Heart left ventricle (tissue), 16 donors: ENCODE measurements at regions of chr1 and their contacts with region 1.

Region 1: DNA sequence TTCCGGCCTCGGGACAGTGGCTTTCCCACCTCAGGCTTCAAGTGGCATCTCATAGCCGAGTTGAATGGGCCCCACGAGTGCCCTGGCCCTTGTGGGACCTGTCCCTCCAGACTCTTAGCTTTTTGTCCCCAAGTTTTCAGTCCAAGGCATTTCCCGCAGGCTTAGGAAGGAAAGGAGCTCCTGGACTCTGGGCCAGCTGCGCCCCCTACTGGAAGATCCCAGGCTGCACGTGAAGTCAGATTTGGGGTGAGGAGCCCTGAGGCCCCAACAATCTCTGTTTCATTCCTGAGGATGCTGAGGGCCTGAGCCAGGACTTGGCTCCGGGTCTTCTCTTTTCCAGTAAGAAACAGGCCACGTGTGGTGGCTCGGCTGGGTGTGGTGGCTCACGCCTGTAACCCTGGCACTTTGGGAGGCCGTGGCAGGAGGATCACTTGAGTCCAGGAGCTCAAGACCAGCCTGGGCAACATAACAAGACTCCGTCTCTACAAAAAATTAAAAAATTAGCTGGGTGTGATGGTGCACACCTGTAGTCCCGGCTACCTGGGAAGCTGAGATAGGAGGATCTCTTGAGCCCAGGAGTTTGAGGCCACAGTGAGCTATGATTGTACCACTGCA is 67.4 kb downstream of the ARHGEF10L start:
- DNase-seq: peak; percentile 59 to 85 (median 72)
- ATAC-seq: peak; percentile 7 to 59 (median 49)
- H3K4me3 ChIP-seq: no peak overlapping the region
- H3K27ac ChIP-seq: peak overlapping the region in 11 of 12 donors; percentile 39 to 95 (median 82)
- H3K4me1 ChIP-seq: peaks cover 3 to 25% (median 19%) of the 10 kb centered on the region in 12 donors
- H3K27me3 ChIP-seq: no peaks in the 10 kb centered on the region
- CTCF ChIP-seq: peak; percentile 83 to 93 (median 88)
- POLR2A ChIP-seq: no peak

Region 2: DNA sequence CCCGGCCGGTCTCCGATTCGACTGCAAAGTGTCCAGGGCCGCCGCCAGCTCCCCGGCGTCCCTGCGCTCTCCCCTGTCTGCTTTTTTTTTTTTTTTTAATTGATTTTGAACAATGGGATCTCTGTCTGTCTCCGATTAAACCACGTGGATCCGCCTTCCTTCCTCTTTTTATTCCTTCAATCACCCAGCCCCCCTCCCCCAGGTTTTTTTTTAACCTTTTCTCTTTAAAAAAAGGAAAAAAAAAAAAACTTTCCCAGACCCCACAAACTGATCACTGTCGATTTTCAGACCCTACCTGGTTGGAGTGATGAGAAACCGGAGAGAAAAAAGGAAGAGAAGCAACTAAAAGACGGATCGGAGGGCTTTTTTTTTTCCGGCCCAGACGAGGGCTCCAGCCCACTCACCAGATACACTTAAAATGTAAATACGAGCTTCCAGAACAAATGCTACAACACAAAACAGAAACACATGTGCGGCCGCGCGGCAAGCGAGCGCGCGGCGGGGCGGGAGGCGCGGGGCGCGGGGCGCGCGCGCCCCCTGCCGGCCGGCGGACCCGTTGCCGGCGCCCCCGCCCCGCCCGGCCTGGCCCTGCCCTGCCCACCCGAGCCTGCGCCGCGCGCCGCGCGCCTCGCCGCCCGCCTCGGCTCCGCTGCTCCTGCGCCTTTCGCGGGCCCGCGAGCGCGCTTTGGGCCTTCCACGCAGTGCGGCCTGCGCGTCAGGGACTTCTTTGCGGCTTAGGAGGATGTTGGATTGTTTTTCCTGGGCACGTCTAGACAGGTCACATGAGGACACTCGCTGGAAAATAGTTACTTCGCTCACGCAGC is 167.5 kb before region 1 on chr1 and contains the start of gene RCC2:
- intact Hi-C with region 1: loop called in 1 of 10 experiments (anchors 5 kb)
- DNase-seq: peak; percentile 70 to 87 (median 77)
- ATAC-seq: peak; percentile 28 to 83 (median 67)
- H3K4me3 ChIP-seq: peak within 1 kb of the TSS; percentile 56 to 95 (median 80)
- H3K27ac ChIP-seq: peak within 1 kb of the TSS; percentile 36 to 93 (median 84)
- H3K4me1 ChIP-seq: peaks cover 0 to 35% (median 16%) of the 10 kb centered on the region in 12 donors
- H3K27me3 ChIP-seq: no peaks in the 10 kb centered on the region
- CTCF ChIP-seq: no peak
- POLR2A ChIP-seq: no peak
- total RNA-seq, gene RCC2: 7.9 to 39.1 (median 14.3) TPM

Region 3: GRCh38 chr1:17502326-17502778 is 104.6 kb before region 1 on chr1:
- intact Hi-C with region 1: loop called (anchors 1 to 2 kb)
- DNase-seq: peak; percentile 81 to 91 (median 85)
- ATAC-seq: peak; percentile 89 to 97 (median 94)
- H3K4me3 ChIP-seq: no peak overlapping the region
- H3K27ac ChIP-seq: peak overlapping the region in 4 of 12 donors; percentile 12 to 34 (median 24)
- H3K4me1 ChIP-seq: peaks cover 0 to 12% (median 5%) of the 10 kb centered on the region in 12 donors
- H3K27me3 ChIP-seq: peaks cover 0 to 7% (median 0%) of the 10 kb centered on the region in 9 donors
- CTCF ChIP-seq: peak; percentile 76 to 91 (median 87)
- POLR2A ChIP-seq: no peak

Region 4: GRCh38 chr1:17569200-17570161 is 37.5 kb before region 1 on chr1:
- intact Hi-C with region 1: loop called in 1 of 10 experiments (anchors 1 kb)
- DNase-seq: peak; percentile 81 to 90 (median 86)
- ATAC-seq: peak; percentile 78 to 87 (median 84)
- H3K4me3 ChIP-seq: peak overlapping the region in 5 of 12 donors; percentile 4 to 12 (median 6)
- H3K27ac ChIP-seq: peak overlapping the region; percentile 86 to 99 (median 95)
- H3K4me1 ChIP-seq: peaks cover 2 to 95% (median 70%) of the 10 kb centered on the region in 12 donors
- H3K27me3 ChIP-seq: no peaks in the 10 kb centered on the region
- CTCF ChIP-seq: no peak
- POLR2A ChIP-seq: peak in 1 of 2 donors; percentile 38

Region 5: GRCh38 chr1:18134324-18135046 is 527.6 kb after region 1 on chr1:
- intact Hi-C with region 1: no loop called
- DNase-seq: no peak
- ATAC-seq: no peak
- H3K4me3 ChIP-seq: no peak overlapping the region
- H3K27ac ChIP-seq: no peak overlapping the region
- H3K4me1 ChIP-seq: no peaks in the 10 kb centered on the region
- H3K27me3 ChIP-seq: peaks cover 0 to 48% (median 8%) of the 10 kb centered on the region in 9 donors
- CTCF ChIP-seq: no peak
- POLR2A ChIP-seq: no peak